K562 (cell line): ENCODE measurements at regions of chr7 and their contacts with region 1.

Region 1: DNA sequence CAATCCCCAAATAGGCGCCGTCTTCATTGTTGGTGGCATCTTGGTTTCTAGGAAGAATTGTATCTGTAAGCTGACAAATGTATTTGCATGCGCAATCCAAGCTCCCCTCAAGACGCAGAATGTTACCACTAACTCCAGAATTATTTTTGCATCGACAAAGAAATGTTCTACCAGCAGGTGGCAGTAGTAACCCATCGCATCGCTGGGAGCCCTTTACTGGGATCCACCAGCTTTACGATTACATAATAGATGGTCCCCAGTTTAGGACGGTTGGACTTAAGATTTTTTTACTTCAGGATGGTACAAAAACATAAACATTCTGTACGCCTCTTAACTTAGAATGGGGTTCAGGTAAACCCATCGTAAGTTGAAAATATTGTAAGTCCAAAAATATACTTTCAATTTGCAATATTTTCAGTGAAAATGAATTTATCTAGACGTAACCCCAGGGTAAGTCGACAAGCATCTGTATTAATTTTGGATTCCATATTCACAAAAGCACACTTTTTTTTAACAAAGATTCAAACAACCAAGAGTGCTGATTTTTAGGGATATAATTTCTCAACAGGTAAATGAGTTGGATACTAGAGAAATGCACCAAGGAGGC is 114.0 kb upstream of the COBL start:
- DNase-seq: peak; percentile 67 to 78 (median 76)
- ATAC-seq: peak; percentile 76
- H3K4me3 ChIP-seq: no peak overlapping the region
- H3K27ac ChIP-seq: no peak overlapping the region
- H3K4me1 ChIP-seq: no peaks in the 10 kb centered on the region
- H3K27me3 ChIP-seq: peaks cover 0 to 8% of the 10 kb centered on the region in 2 experiments; a peak in 2 of 5 replicates
- CTCF ChIP-seq: peak; percentile 64 to 84 (median 70)
- EP300 ChIP-seq: no peak
- POLR2A ChIP-seq: no peak
- RAD21 ChIP-seq: peak; percentile 71 to 85

Region 2: GRCh38 chr7:52917982-52918578 is 1487.5 kb after region 1 on chr7:
- CTCF ChIA-PET with region 1: no interaction called
- POLR2A ChIA-PET with region 1: no interaction called
- in situ Hi-C with region 1: no loop called
- intact Hi-C with region 1: loop called (anchors 10 kb)
- DNase-seq: peak; percentile 1 to 27 (median 12)
- ATAC-seq: no peak
- H3K4me3 ChIP-seq: no peak overlapping the region
- H3K27ac ChIP-seq: no peak overlapping the region
- H3K4me1 ChIP-seq: no peaks in the 10 kb centered on the region
- H3K27me3 ChIP-seq: no peaks in the 10 kb centered on the region
- CTCF ChIP-seq: peak in 2 of 3 experiments; percentile 30 to 31; a peak in 2 of 6 replicates
- EP300 ChIP-seq: no peak
- POLR2A ChIP-seq: no peak
- RAD21 ChIP-seq: no peak